GM12878 (cell line): ENCODE measurements at regions of chr6 and their contacts with region 1.

Region 1: DNA sequence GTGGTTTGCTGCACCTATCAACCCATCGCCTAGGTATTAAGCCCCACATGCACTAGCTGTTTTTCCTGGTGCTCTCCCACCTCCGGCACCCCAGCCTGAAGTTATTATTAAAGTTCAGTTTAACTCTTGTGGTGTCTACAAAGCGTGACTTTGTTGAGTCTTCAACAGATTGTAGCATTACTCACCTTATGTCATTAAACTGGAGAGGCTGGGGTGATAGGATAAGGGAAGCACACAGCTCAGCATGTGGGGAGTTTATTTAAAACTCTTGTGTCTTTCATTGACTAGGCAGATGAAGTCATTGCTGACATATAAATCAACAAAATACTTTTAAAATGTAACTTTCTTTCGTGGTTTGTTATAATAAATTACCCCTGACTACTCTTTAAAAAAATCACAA is 84.7 kb upstream of the GCM1 start:
- DNase-seq: no peak
- ATAC-seq: no peak
- H3K4me3 ChIP-seq: no peak overlapping the region
- H3K27ac ChIP-seq: no peak overlapping the region
- H3K4me1 ChIP-seq: peaks cover 26% of the 10 kb centered on the region
- H3K27me3 ChIP-seq: no peaks in the 10 kb centered on the region
- CTCF ChIP-seq: no peak
- EP300 ChIP-seq: no peak
- POLR2A ChIP-seq: no peak
- RAD21 ChIP-seq: no peak

Region 2: GRCh38 chr6:52724042-52724405 is 509.3 kb before region 1 on chr6:
- CTCF ChIA-PET with region 1: no interaction called
- POLR2A ChIA-PET with region 1: no interaction called
- RAD21 ChIA-PET with region 1: no interaction called
- SMC1A ChIA-PET with region 1: no interaction called
- in situ Hi-C with region 1: no loop called
- intact Hi-C with region 1: no loop called
- DNase-seq: no peak
- ATAC-seq: no peak
- H3K4me3 ChIP-seq: no peak overlapping the region
- H3K27ac ChIP-seq: no peak overlapping the region
- H3K4me1 ChIP-seq: peaks cover 5% of the 10 kb centered on the region
- H3K27me3 ChIP-seq: no peaks in the 10 kb centered on the region
- CTCF ChIP-seq: no peak
- EP300 ChIP-seq: no peak
- POLR2A ChIP-seq: no peak
- RAD21 ChIP-seq: no peak

Region 3: DNA sequence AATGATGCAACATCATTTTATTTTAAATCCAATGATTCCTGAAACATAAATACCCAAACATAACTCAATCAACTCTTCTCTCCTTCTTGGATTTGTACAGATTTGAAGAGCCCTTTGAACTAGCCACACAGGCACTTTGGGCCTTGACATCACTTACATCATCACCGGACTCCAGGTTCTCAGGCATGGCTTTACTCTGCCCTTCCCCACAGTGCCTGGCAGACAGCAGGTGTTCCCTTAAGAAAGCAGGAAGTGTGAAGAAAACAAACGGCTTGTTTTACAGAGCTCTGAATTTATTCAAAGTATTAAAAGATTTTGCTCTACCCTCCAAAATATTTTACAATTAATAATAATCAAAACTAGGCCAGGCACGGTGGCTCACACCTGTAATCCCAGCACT is 29.8 kb before region 1 on chr6:
- CTCF ChIA-PET with region 1: interaction called, 3 read pairs
- POLR2A ChIA-PET with region 1: interaction called, 4 read pairs
- RAD21 ChIA-PET with region 1: interaction called, 9 read pairs
- SMC1A ChIA-PET with region 1: interaction called, 20 read pairs
- in situ Hi-C with region 1: no loop called
- intact Hi-C with region 1: loop called (anchors 1 kb)
- DNase-seq: no peak
- ATAC-seq: no peak
- H3K4me3 ChIP-seq: no peak overlapping the region
- H3K27ac ChIP-seq: no peak overlapping the region
- H3K4me1 ChIP-seq: peaks cover 12% of the 10 kb centered on the region
- H3K27me3 ChIP-seq: no peaks in the 10 kb centered on the region
- CTCF ChIP-seq: no peak
- EP300 ChIP-seq: no peak
- POLR2A ChIP-seq: no peak
- RAD21 ChIP-seq: no peak

Region 4: GRCh38 chr6:53244958-53245357 is 11.6 kb after region 1 on chr6:
- CTCF ChIA-PET with region 1: interaction called, 7 read pairs
- POLR2A ChIA-PET with region 1: interaction called, 5 read pairs
- RAD21 ChIA-PET with region 1: interaction called, 23 read pairs
- SMC1A ChIA-PET with region 1: interaction called, 35 read pairs
- in situ Hi-C with region 1: no loop called
- intact Hi-C with region 1: no loop called
- DNase-seq: peak; percentile 72
- ATAC-seq: peak; percentile 87
- H3K4me3 ChIP-seq: no peak overlapping the region
- H3K27ac ChIP-seq: no peak overlapping the region
- H3K4me1 ChIP-seq: peaks cover 35% of the 10 kb centered on the region
- H3K27me3 ChIP-seq: no peaks in the 10 kb centered on the region
- CTCF ChIP-seq: no peak
- EP300 ChIP-seq: peak in 1 of 2 experiments; percentile 51; a peak in 1 of 4 replicates
- POLR2A ChIP-seq: no peak
- RAD21 ChIP-seq: no peak